B cell (primary cell): ENCODE measurements at regions of chr2 and their contacts with region 1.

Region 1: GRCh38 chr2:30231212-30231995 is at the start of gene LBH:
- DNase-seq: peak; percentile 97
- ATAC-seq: peak; percentile 56
- H3K4me3 ChIP-seq: peak within 1 kb of the TSS; percentile 84 to 94 (median 93)
- H3K4me3 Mint-ChIP-seq: peak within 1 kb of the TSS; percentile 80
- H3K27ac ChIP-seq: peak within 1 kb of the TSS; percentile 93 to 94
- H3K27ac Mint-ChIP-seq: peak within 1 kb of the TSS; percentile 98
- H3K4me1 ChIP-seq: peaks cover 38 to 48% of the 10 kb centered on the region in 2 donors
- H3K4me1 Mint-ChIP-seq: peaks cover 47% of the 10 kb centered on the region
- H3K27me3 ChIP-seq: no peaks in the 10 kb centered on the region
- H3K27me3 Mint-ChIP-seq: no peaks in the 10 kb centered on the region
- CTCF ChIP-seq: no peak
- total RNA-seq, gene LBH: 197 and 201 TPM in 2 replicates

Region 2: GRCh38 chr2:30165050-30165520 is 66.3 kb before region 1 on chr2:
- CTCF ChIA-PET with region 1: interaction called, 6 read pairs
- POLR2A ChIA-PET with region 1: interaction called, 14 read pairs
- intact Hi-C with region 1: no loop called
- DNase-seq: peak; percentile 87
- ATAC-seq: peak; percentile 100
- H3K4me3 ChIP-seq: no peak overlapping the region
- H3K4me3 Mint-ChIP-seq: no peak overlapping the region
- H3K27ac ChIP-seq: no peak overlapping the region
- H3K27ac Mint-ChIP-seq: no peak overlapping the region
- H3K4me1 ChIP-seq: peaks cover 8% of the 10 kb centered on the region in 2 donors
- H3K4me1 Mint-ChIP-seq: peaks cover 16% of the 10 kb centered on the region
- H3K27me3 ChIP-seq: no peaks in the 10 kb centered on the region
- H3K27me3 Mint-ChIP-seq: no peaks in the 10 kb centered on the region
- CTCF ChIP-seq: peak; percentile 85

Region 3: DNA sequence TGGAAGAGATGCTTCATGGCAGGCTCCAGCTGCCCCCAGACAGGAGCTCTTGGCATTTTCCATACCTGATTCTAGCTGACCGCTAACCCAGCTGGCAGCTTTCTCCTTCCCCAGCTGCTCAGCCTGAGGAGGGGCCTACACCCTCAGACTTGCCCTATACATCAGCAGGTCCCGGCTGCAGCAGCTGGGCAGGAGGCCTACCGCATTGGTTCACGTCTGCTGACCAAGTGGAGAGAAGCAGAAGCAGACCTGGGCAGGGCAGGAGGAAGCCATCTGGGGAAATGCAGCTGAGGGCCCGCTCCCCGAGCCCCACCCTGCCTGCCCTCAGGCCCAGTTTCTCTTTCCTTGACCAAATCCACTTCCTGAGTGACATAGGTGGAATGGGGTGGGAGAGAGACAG is 50.7 kb after region 1 on chr2:
- CTCF ChIA-PET with region 1: interaction called, 17 read pairs
- POLR2A ChIA-PET with region 1: interaction called, 59 read pairs
- intact Hi-C with region 1: loop called (anchors 1 kb)
- DNase-seq: peak; percentile 89
- ATAC-seq: peak; percentile 98
- H3K4me3 ChIP-seq: peak overlapping the region in 2 of 5 experiments; percentile 11 to 40
- H3K4me3 Mint-ChIP-seq: peak overlapping the region; percentile 66
- H3K27ac ChIP-seq: peak overlapping the region; percentile 75 to 88
- H3K27ac Mint-ChIP-seq: peak overlapping the region; percentile 92
- H3K4me1 ChIP-seq: peaks cover 89 to 94% of the 10 kb centered on the region in 2 donors
- H3K4me1 Mint-ChIP-seq: peaks cover 91% of the 10 kb centered on the region
- H3K27me3 ChIP-seq: no peaks in the 10 kb centered on the region
- H3K27me3 Mint-ChIP-seq: no peaks in the 10 kb centered on the region
- CTCF ChIP-seq: no peak

Region 4: DNA sequence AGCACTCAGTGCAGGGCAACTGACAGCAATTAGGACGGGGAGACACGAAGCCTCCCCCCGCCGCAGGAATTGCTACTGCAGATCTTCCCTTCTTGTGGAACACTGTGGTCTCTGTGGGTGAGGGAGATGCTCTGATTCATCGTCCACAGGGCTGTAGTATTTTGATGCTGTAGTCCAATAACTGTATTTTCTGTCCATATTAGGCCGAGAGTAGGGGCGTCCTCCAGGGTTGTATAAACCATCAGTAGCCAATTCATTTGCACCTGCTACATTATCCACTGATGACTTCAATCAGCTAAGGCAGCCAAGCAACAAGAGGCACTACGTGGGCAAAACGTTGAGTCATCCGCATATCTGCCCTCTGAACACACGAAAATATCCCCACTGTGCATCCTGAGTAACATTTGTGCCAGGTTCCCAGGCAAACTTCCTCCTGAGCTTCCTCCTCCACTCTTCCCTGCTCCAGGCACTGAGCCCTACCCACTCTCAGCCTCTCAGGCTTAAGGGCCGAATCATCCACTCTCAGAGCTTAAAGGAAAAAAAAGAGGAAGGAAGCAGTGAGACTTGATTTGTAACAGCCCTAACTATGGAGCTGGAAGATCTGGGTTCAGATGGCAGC is 62.0 kb after region 1 on chr2:
- CTCF ChIA-PET with region 1: interaction called, 17 read pairs
- POLR2A ChIA-PET with region 1: interaction called, 51 read pairs
- intact Hi-C with region 1: loop called (anchors 1 kb)
- DNase-seq: peak; percentile 56
- ATAC-seq: peak; percentile 74
- H3K4me3 ChIP-seq: no peak overlapping the region
- H3K4me3 Mint-ChIP-seq: peak overlapping the region; percentile 73
- H3K27ac ChIP-seq: peak overlapping the region; percentile 25 to 50
- H3K27ac Mint-ChIP-seq: peak overlapping the region; percentile 94
- H3K4me1 ChIP-seq: peaks cover 66 to 70% of the 10 kb centered on the region in 2 donors
- H3K4me1 Mint-ChIP-seq: peaks cover 79% of the 10 kb centered on the region
- H3K27me3 ChIP-seq: no peaks in the 10 kb centered on the region
- H3K27me3 Mint-ChIP-seq: no peaks in the 10 kb centered on the region
- CTCF ChIP-seq: no peak

Region 5: GRCh38 chr2:30447149-30448045 is 216.0 kb after region 1 on chr2 and contains the start of gene LCLAT1:
- CTCF ChIA-PET with region 1: interaction called, 6 read pairs
- POLR2A ChIA-PET with region 1: interaction called, 6 read pairs
- intact Hi-C with region 1: loop called (anchors 1 kb)
- DNase-seq: peak; percentile 92
- ATAC-seq: peak; percentile 93
- H3K4me3 ChIP-seq: peak within 1 kb of the TSS; percentile 88 to 98 (median 97)
- H3K4me3 Mint-ChIP-seq: peak within 1 kb of the TSS; percentile 97
- H3K27ac ChIP-seq: peak within 1 kb of the TSS; percentile 82 to 84
- H3K27ac Mint-ChIP-seq: peak within 1 kb of the TSS; percentile 95
- H3K4me1 ChIP-seq: peaks cover 16 to 17% of the 10 kb centered on the region in 2 donors
- H3K4me1 Mint-ChIP-seq: peaks cover 25% of the 10 kb centered on the region
- H3K27me3 ChIP-seq: no peaks in the 10 kb centered on the region
- H3K27me3 Mint-ChIP-seq: no peaks in the 10 kb centered on the region
- CTCF ChIP-seq: peak; percentile 20
- total RNA-seq, gene LCLAT1: 21.7 and 21.9 TPM in 2 replicates

Region 6: GRCh38 chr2:30584116-30584515 is 352.7 kb after region 1 on chr2:
- CTCF ChIA-PET with region 1: no interaction called
- POLR2A ChIA-PET with region 1: interaction called, 8 read pairs
- intact Hi-C with region 1: loop called (anchors 5 kb)
- DNase-seq: peak; percentile 59
- ATAC-seq: peak; percentile 81
- H3K4me3 ChIP-seq: peak overlapping the region in 3 of 5 experiments; percentile 5 to 52 (median 13)
- H3K4me3 Mint-ChIP-seq: peak overlapping the region; percentile 84
- H3K27ac ChIP-seq: peak overlapping the region; percentile 74 to 80
- H3K27ac Mint-ChIP-seq: peak overlapping the region; percentile 97
- H3K4me1 ChIP-seq: peaks cover 67 to 81% of the 10 kb centered on the region in 2 donors
- H3K4me1 Mint-ChIP-seq: peaks cover 78% of the 10 kb centered on the region
- H3K27me3 ChIP-seq: no peaks in the 10 kb centered on the region
- H3K27me3 Mint-ChIP-seq: no peaks in the 10 kb centered on the region
- CTCF ChIP-seq: no peak

Region 7: DNA sequence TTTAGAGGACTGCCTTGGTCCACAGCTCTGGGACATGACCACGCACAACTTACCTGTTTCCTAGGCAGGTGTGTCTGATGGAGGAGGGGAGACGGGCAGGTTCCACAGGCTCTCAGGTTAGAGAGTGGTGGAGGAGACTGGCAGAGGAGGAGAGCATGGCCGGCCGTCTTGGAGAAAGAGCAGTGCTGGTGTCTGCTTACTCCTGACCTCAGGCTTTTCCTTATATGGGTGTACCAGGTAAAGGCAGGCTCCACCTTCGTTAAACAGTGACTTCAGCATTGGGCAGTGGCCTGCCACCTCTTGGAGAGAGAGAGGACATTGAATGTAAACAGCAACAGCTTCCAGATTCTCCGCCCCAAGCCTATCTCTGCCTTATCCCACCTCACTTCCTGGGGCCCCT is 575.8 kb after region 1 on chr2 and contains the start of gene CAPN13:
- CTCF ChIA-PET with region 1: no interaction called
- POLR2A ChIA-PET with region 1: no interaction called
- intact Hi-C with region 1: no loop called
- DNase-seq: no peak
- ATAC-seq: no peak
- H3K4me3 ChIP-seq: no peak within 1 kb of the TSS
- H3K4me3 Mint-ChIP-seq: no peak within 1 kb of the TSS
- H3K27ac ChIP-seq: no peak within 1 kb of the TSS
- H3K27ac Mint-ChIP-seq: no peak within 1 kb of the TSS
- H3K4me1 ChIP-seq: no peaks in the 10 kb centered on the region
- H3K4me1 Mint-ChIP-seq: no peaks in the 10 kb centered on the region
- H3K27me3 ChIP-seq: peaks cover 0 to 3% (median 1%) of the 10 kb centered on the region in 4 experiments
- H3K27me3 Mint-ChIP-seq: peaks cover 32% of the 10 kb centered on the region
- CTCF ChIP-seq: no peak
- total RNA-seq, gene CAPN13: not detected in 2 replicates